Brain microvascular endothelial cell (primary cell): ENCODE measurements at regions of chr10 and their contacts with region 1.

Region 1: DNA sequence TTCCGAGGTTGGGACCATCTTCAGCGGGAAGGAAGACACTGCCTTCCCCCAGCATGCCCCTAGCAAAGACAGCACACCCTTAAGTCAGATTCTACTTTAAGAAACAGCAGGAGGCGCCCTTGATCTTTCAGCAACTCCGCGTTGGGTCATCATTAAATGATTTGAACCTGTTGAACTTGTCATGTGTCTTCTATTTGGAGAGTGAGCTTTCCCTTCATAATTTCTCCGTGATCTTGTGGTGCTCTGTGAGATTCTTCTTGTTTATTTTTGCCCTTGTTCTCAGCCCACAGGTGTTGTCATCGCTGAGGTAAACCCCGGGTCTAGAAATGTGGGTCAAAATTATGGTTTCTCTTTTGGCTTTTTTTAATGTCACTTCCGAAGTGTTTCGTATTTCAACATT is 49.5 kb upstream of the PITRM1 start:
- DNase-seq: peak; percentile 63
- H3K4me3 ChIP-seq: no peak overlapping the region
- H3K27ac ChIP-seq: peak overlapping the region; percentile 66
- H3K27me3 ChIP-seq: no peaks in the 10 kb centered on the region
- CTCF ChIP-seq: peak; percentile 53

Region 2: GRCh38 chr10:4775808-4776207 is 1553.7 kb after region 1 on chr10:
- in situ Hi-C with region 1: loop called (anchors 25 kb)
- DNase-seq: peak; percentile 25
- H3K4me3 ChIP-seq: no peak overlapping the region
- H3K27ac ChIP-seq: no peak overlapping the region
- H3K27me3 ChIP-seq: no peaks in the 10 kb centered on the region
- CTCF ChIP-seq: no peak